Naive thymus-derived CD4-positive, alpha-beta T cell (primary cell): ENCODE measurements at regions of chr5 and their contacts with region 1.

Region 1: GRCh38 chr5:132736853-132737833 is at the start of gene KIF3A:
- DNase-seq: peak; percentile 93 to 98 (median 97)
- ATAC-seq: peak; percentile 95
- H3K4me3 ChIP-seq: peak within 1 kb of the TSS; percentile 96
- H3K4me3 Mint-ChIP-seq: peak within 1 kb of the TSS; percentile 87 to 94 (median 92)
- H3K27ac ChIP-seq: peak within 1 kb of the TSS; percentile 78
- H3K27ac Mint-ChIP-seq: peak within 1 kb of the TSS; percentile 84 to 94 (median 92)
- H3K4me1 ChIP-seq: peaks cover 13 to 18% of the 10 kb centered on the region in 2 donors
- H3K4me1 Mint-ChIP-seq: peaks cover 14 to 52% (median 39%) of the 10 kb centered on the region in 7 donors
- H3K27me3 ChIP-seq: no peaks in the 10 kb centered on the region
- H3K27me3 Mint-ChIP-seq: peaks cover 0 to 18% (median 2%) of the 10 kb centered on the region in 5 donors
- total RNA-seq, gene KIF3A: 10.5 to 30.0 (median 18.7) TPM

Region 2: GRCh38 chr5:132293066-132293991 is 443.8 kb before region 1 on chr5:
- CTCF ChIA-PET with region 1: no interaction called
- POLR2A ChIA-PET with region 1: no interaction called
- intact Hi-C with region 1: loop called in 1 of 2 experiments (anchors 5 kb)
- DNase-seq: peak; percentile 8 to 79 (median 35)
- ATAC-seq: peak; percentile 54
- H3K4me3 ChIP-seq: peak overlapping the region; percentile 69
- H3K4me3 Mint-ChIP-seq: peak overlapping the region; percentile 80 to 95 (median 90)
- H3K27ac ChIP-seq: peak overlapping the region; percentile 43
- H3K27ac Mint-ChIP-seq: peak overlapping the region in 3 of 9 donors; percentile 36 to 75 (median 43)
- H3K4me1 ChIP-seq: peaks cover 0 to 8% of the 10 kb centered on the region in 2 donors
- H3K4me1 Mint-ChIP-seq: peaks cover 5 to 26% (median 9%) of the 10 kb centered on the region in 7 donors
- H3K27me3 ChIP-seq: no peaks in the 10 kb centered on the region
- H3K27me3 Mint-ChIP-seq: peaks cover 9 to 32% (median 19%) of the 10 kb centered on the region in 5 donors

Region 3: GRCh38 chr5:132495667-132496190 is 241.4 kb before region 1 on chr5:
- CTCF ChIA-PET with region 1: no interaction called
- POLR2A ChIA-PET with region 1: no interaction called
- intact Hi-C with region 1: loop called in 1 of 2 experiments (anchors 1 kb)
- DNase-seq: peak in 7 of 9 donors; percentile 42 to 79 (median 54)
- ATAC-seq: peak; percentile 48
- H3K4me3 ChIP-seq: peak overlapping the region; percentile 91
- H3K4me3 Mint-ChIP-seq: peak overlapping the region; percentile 86 to 99 (median 97)
- H3K27ac ChIP-seq: peak overlapping the region; percentile 99
- H3K27ac Mint-ChIP-seq: peak overlapping the region; percentile 90 to 99 (median 97)
- H3K4me1 ChIP-seq: peaks cover 48 to 57% of the 10 kb centered on the region in 2 donors
- H3K4me1 Mint-ChIP-seq: peaks cover 36 to 79% (median 68%) of the 10 kb centered on the region in 7 donors
- H3K27me3 ChIP-seq: no peaks in the 10 kb centered on the region
- H3K27me3 Mint-ChIP-seq: no peaks in the 10 kb centered on the region

Region 4: GRCh38 chr5:132639706-132640130 is 97.4 kb before region 1 on chr5:
- CTCF ChIA-PET with region 1: no interaction called
- POLR2A ChIA-PET with region 1: no interaction called
- intact Hi-C with region 1: loop called in 1 of 2 experiments (anchors 2 kb)
- DNase-seq: no peak
- ATAC-seq: no peak
- H3K4me3 ChIP-seq: no peak overlapping the region
- H3K4me3 Mint-ChIP-seq: peak overlapping the region in 1 of 10 donors; percentile 55
- H3K27ac ChIP-seq: no peak overlapping the region
- H3K27ac Mint-ChIP-seq: peak overlapping the region in 2 of 9 donors; percentile 32 to 64
- H3K4me1 ChIP-seq: no peaks in the 10 kb centered on the region
- H3K4me1 Mint-ChIP-seq: peaks cover 0 to 87% (median 0%) of the 10 kb centered on the region in 7 donors
- H3K27me3 ChIP-seq: no peaks in the 10 kb centered on the region
- H3K27me3 Mint-ChIP-seq: no peaks in the 10 kb centered on the region

Region 5: DNA sequence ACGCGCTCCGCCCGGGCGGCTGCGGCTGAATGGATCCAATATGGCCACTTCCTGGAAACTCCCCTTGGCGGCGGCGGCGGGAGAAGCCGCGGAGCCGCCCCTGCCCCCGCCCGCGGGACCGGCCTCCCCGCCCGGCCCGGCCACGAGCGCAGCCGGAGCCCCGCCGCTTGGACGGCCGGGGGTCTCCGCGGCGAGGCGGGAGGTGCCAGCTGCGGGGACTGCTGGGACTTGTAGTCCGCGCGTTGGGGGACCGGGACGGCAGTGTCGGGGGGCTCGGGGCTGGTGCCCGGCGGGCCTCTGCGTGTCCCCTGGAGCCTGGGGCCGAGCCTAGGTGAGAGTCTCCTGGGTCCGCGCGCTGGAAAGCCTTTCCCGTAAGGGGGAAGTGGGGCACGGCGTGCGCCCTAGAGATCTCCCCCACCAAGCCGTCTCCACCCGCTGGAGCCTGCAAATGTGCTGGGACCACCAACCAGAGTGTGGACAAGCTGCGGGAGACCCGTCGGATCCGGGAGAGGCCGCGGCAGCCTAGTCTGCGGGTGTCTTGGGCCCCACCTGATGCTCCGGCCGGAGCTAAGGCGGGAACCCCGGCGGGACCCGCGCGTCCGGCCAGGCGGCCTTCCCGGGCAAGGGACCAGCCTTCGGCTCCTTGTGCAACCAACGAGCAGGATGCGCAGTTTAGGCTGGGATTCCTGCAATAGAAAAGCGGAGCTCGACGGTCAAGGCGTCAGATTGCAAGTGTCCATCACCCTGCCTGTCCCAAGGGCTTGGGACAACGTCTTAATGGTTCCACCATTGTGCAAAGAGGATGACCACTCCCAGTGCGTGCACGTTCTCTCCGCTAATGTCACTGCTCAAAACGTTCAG is 40.3 kb after region 1 on chr5 and contains the start of gene SEPTIN8:
- CTCF ChIA-PET with region 1: no interaction called
- POLR2A ChIA-PET with region 1: no interaction called
- intact Hi-C with region 1: loop called (anchors 1 to 2 kb)
- DNase-seq: peak in 7 of 9 donors; percentile 1 to 70 (median 26)
- ATAC-seq: peak; percentile 72
- H3K4me3 ChIP-seq: peak within 1 kb of the TSS; percentile 68
- H3K4me3 Mint-ChIP-seq: peak within 1 kb of the TSS; percentile 71 to 91 (median 84)
- H3K27ac ChIP-seq: no peak within 1 kb of the TSS
- H3K27ac Mint-ChIP-seq: peak within 1 kb of the TSS in 5 of 9 donors; percentile 20 to 85 (median 56)
- H3K4me1 ChIP-seq: peaks cover 7 to 15% of the 10 kb centered on the region in 2 donors
- H3K4me1 Mint-ChIP-seq: peaks cover 0 to 41% (median 26%) of the 10 kb centered on the region in 7 donors
- H3K27me3 ChIP-seq: peaks cover 0 to 8% of the 10 kb centered on the region in 2 donors
- H3K27me3 Mint-ChIP-seq: peaks cover 33 to 63% (median 45%) of the 10 kb centered on the region in 5 donors
- total RNA-seq, gene SEPTIN8: 2.7 to 42.1 (median 5.2) TPM

Region 6: GRCh38 chr5:132963175-132964104 is 226.3 kb after region 1 on chr5 and contains the start of gene AFF4:
- CTCF ChIA-PET with region 1: no interaction called
- POLR2A ChIA-PET with region 1: interaction called, 3 read pairs
- intact Hi-C with region 1: loop called in 1 of 2 experiments (anchors 2 kb)
- DNase-seq: peak; percentile 81 to 90 (median 85)
- ATAC-seq: peak; percentile 92
- H3K4me3 ChIP-seq: peak within 1 kb of the TSS; percentile 65
- H3K4me3 Mint-ChIP-seq: peak within 1 kb of the TSS; percentile 90 to 100 (median 98)
- H3K27ac ChIP-seq: peak within 1 kb of the TSS; percentile 94
- H3K27ac Mint-ChIP-seq: peak within 1 kb of the TSS; percentile 96 to 100 (median 98)
- H3K4me1 ChIP-seq: peaks cover 10 to 22% of the 10 kb centered on the region in 2 donors
- H3K4me1 Mint-ChIP-seq: peaks cover 26 to 52% (median 38%) of the 10 kb centered on the region in 7 donors
- H3K27me3 ChIP-seq: no peaks in the 10 kb centered on the region
- H3K27me3 Mint-ChIP-seq: no peaks in the 10 kb centered on the region
- total RNA-seq, gene AFF4: 39.7 to 82.3 (median 69.0) TPM